ENCODE measurements at regions of chr13 and their contacts with region 1.

Region 1: GRCh38 chr13:79423801-79424642 is 18.0 kb upstream of the RBM26 start:
- DNase-seq: no peak
- H3K4me3 ChIP-seq: no peak overlapping the region
- H3K27ac ChIP-seq: no peak overlapping the region
- H3K4me1 ChIP-seq: no peaks in the 10 kb centered on the region
- H3K27me3 ChIP-seq: no peaks in the 10 kb centered on the region
- CTCF ChIP-seq: peak; percentile 59 to 67 (median 63)
- POLR2A ChIP-seq: no peak

Region 2: DNA sequence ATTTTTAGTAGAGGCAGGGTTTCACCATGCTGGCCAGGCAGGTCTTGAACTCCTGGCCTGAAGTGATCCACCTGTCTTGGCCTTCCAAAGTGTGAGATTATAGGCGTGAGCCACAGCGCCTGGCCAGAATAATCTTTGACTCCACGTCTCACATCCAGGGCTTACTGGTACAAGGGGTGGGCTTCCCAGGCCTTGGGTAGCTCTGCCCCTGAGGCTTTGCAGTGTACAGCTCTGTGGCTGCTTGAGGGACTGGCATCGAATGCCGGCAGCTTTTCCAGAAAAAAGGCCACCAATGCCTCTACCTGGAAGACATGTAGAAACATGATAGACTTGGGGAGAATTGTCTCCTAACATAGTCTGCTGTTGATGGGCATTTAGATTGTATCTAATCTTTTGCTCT is 114.7 kb after region 1 on chr13:
- intact Hi-C with region 1: loop called (anchors 5 kb)
- DNase-seq: no peak
- H3K4me3 ChIP-seq: no peak overlapping the region
- H3K27ac ChIP-seq: no peak overlapping the region
- H3K4me1 ChIP-seq: no peaks in the 10 kb centered on the region
- H3K27me3 ChIP-seq: no peaks in the 10 kb centered on the region
- CTCF ChIP-seq: no peak
- POLR2A ChIP-seq: no peak

Region 3: DNA sequence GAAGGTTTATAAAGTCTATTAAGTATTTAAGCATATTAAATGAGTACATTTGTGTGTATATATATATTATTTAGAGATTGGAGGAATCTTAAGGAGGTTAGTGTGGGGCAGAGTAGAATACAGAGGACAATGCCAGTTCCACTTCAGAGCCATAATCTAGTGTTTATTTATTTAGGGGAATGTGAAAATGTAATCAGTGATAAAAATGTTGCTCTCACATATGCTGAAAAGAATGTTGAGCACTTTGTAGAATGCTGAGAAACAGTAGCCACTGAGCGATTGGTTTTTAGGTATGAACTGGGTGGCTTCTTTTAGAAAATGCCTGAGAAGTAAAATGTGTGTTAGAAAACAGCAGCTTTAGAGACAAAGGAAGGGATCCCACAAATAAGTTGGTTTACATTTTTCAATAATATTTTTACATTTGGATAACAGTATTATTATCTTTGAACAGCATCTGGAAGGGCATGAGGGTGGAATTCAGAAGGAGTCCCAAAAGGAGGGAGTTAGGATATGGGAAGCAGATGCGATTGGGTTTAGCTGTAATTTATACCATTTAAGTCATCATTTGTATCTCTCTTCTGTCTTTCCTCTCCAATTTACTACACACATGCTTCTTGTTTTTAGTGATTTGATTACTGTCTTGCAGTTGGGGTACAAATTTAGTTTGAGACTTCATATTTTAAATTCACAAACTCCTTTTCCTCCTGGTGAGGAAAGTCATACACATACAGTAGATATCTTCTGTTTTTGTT is 125.5 kb after region 1 on chr13:
- intact Hi-C with region 1: no loop called
- DNase-seq: no peak
- H3K4me3 ChIP-seq: no peak overlapping the region
- H3K27ac ChIP-seq: no peak overlapping the region
- H3K4me1 ChIP-seq: no peaks in the 10 kb centered on the region
- H3K27me3 ChIP-seq: no peaks in the 10 kb centered on the region
- CTCF ChIP-seq: no peak
- POLR2A ChIP-seq: no peak

Region 4: DNA sequence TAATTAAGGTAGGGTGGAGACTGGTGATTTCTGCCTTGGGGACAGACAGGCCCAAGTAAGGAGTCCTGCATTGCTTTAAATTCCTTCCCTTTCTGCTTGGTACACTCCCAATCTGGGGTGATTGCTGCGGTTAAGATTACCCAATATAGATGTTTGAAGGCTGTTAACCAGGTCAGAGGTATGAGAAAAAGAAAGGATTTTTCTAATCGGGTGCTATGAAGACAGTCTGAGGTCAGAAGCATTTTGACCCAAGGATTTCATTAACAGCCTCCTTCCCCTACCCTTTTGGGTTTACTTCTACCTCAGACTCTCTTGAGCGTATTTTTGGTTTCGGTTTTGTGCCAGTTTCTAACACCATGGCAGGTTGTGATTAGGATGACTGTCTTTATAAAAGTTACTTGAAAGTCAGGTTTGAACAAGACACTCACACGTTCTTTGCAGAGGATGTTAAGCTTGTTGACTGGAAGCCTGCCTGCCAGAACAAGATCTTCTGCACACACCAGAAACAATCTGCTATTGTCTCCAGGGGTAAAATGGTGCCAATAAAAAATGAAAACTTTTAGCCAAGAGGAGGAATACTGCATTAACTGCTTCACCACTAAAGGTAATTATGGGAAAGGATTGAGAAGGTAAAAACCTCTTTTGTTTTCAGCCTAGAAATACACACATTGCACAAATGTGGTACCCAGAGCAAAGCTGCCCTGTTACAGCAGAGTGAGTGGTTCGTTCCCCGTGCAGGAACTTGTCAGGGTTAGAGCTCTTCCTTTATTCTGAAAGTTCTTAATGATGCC is 165.8 kb after region 1 on chr13:
- intact Hi-C with region 1: no loop called
- DNase-seq: no peak
- H3K4me3 ChIP-seq: no peak overlapping the region
- H3K27ac ChIP-seq: no peak overlapping the region
- H3K4me1 ChIP-seq: no peaks in the 10 kb centered on the region
- H3K27me3 ChIP-seq: no peaks in the 10 kb centered on the region
- CTCF ChIP-seq: no peak
- POLR2A ChIP-seq: no peak

Measured in uterus (tissue), 4 donors.